ENCODE measurements at regions of chrX and their contacts with region 1.

Region 1: DNA sequence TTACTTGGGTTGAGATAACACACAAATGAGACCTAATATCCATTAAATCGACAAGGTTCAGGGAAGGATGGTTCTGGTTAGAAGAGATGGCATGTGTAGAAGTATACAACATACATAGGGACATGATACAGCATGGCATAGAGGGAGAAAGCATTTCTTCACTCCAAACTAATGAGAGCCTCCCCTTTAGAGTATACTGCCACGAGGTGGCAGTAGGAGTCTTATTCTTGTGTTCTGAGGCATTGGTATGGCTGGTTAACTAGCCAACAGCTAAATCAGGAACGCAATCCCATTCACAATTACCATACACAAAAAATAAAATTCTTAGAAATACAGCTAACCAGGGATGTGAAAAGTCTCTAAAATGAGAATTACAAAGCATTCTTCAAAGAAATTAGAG is 29.1 kb upstream of the TRO start:
- H3K4me3 ChIP-seq: no peak overlapping the region
- H3K27ac ChIP-seq: no peak overlapping the region
- H3K4me1 ChIP-seq: no peaks in the 10 kb centered on the region
- CTCF ChIP-seq: no peak

Region 2: DNA sequence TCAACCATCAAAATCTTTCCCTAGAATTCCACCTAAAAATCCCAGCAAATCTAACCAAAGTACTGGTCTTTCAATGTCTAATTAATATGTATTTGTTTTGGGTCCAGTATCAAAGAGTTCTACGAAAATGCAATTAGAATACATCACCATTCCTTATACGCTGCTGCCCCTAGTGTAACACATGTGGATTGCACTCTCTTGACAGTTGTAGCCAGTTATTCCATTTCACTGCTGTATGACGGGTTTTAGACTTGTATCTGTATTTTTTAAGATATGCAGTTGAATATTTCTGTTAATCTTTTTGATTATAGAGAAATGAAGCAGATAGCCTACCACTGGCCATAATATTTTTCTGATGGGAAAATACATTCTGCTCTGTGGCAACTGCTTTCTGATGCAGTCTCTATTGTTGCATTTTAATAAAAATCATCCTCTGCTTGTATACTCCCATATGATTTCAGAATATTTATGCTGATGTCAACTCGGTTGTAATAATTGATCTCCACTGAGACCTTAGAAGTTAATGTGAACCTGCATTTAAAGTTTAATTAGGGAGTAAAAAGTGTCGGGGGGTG is 166.2 kb after region 1 on chrX:
- CTCF ChIA-PET with region 1: interaction called, 10 read pairs
- POLR2A ChIA-PET with region 1: no interaction called
- H3K4me3 ChIP-seq: no peak overlapping the region
- H3K27ac ChIP-seq: no peak overlapping the region
- H3K4me1 ChIP-seq: no peaks in the 10 kb centered on the region
- CTCF ChIP-seq: peak; percentile 30; the same call in 1 of the 2 replicates